ENCODE measurements at regions of chr17 and their contacts with region 1.

Region 1: DNA sequence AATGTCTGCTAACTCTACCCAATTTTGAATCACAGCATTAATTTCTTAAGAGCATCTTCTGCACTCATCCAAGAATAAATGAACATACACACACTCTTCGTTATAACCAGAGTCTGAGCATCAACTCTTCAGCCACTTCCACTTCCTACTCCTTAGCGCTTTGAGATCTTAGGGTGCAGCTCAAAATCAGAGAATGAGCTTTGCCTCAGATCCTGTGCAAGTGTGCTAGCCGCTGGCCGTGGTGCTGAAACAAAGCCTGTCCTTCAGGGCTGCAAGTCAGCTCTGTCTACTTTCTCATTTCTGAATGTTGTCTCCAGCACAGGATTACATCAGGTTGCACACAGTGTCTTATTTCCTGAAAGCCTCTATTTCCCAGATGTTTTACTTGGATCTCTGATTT is 165.4 kb downstream of the AIPL1 start:
- DNase-seq: no peak
- ATAC-seq: 0 out of 3 replicates have a peak, but pooled peaks have one; percentile 32
- H3K4me3 ChIP-seq: no peak overlapping the region
- H3K27ac ChIP-seq: no peak overlapping the region
- H3K4me1 ChIP-seq: no peaks in the 10 kb centered on the region
- H3K27me3 ChIP-seq: no peaks in the 10 kb centered on the region
- CTCF ChIP-seq: no peak
- EP300 ChIP-seq: no peak
- POLR2A ChIP-seq: no peak
- RAD21 ChIP-seq: no peak

Region 2: DNA sequence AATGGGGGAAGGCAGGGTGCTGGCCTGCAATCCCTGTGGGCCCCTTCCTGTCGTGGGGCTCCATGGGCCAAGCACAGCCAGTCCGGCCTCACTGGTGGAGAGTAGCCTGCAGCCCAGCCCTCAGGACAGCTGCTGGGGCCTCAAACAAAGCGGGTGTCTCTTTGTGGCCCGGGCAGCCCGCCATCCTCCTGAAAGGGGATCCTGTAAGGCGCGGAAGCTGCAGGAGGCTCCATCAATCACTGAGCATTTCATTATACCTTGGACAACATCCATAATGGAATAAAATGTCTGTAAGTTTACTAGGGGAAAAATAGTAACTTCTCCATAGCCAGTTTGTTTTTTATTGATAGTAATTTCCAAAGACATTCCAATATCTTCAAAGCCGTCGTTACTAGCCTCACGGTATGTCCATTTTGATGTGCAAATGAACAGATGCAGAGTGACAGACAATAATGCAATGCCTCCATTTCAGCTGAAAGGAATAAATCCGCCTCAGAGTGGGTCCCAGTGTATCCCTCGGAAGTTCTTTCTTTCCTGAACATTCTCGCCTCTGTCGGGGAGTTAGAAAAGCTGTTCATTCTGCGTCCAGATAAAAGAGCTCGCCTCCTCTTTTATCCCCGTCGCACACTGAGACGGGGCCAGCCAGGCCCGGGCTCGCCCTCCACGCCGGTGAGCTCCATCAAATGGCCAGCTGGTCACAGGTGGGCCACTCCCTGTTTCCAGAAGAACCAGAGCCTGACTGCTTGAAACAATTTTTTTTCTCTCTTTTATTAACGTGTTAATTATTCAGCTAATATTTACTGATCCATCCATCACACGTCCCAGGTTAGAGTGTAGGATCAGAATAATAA is 184.9 kb before region 1 on chr17:
- CTCF ChIA-PET with region 1: no interaction called
- POLR2A ChIA-PET with region 1: no interaction called
- RAD21 ChIA-PET with region 1: no interaction called
- SMC1A ChIA-PET with region 1: no interaction called
- in situ Hi-C with region 1: no loop called
- intact Hi-C with region 1: no loop called
- DNase-seq: no peak
- ATAC-seq: no peak
- H3K4me3 ChIP-seq: no peak overlapping the region
- H3K27ac ChIP-seq: no peak overlapping the region
- H3K4me1 ChIP-seq: no peaks in the 10 kb centered on the region
- H3K27me3 ChIP-seq: no peaks in the 10 kb centered on the region; a peak in 2 of 4 replicates
- CTCF ChIP-seq: no peak
- EP300 ChIP-seq: no peak
- POLR2A ChIP-seq: no peak
- RAD21 ChIP-seq: no peak

Region 3: GRCh38 chr17:6215071-6216035 is 54.1 kb before region 1 on chr17:
- CTCF ChIA-PET with region 1: no interaction called
- POLR2A ChIA-PET with region 1: no interaction called
- RAD21 ChIA-PET with region 1: no interaction called
- SMC1A ChIA-PET with region 1: no interaction called
- in situ Hi-C with region 1: loop called (anchors 5 kb)
- intact Hi-C with region 1: no loop called
- DNase-seq: no peak
- ATAC-seq: no peak
- H3K4me3 ChIP-seq: no peak overlapping the region
- H3K27ac ChIP-seq: no peak overlapping the region
- H3K4me1 ChIP-seq: no peaks in the 10 kb centered on the region
- H3K27me3 ChIP-seq: no peaks in the 10 kb centered on the region; a peak in 2 of 4 replicates
- CTCF ChIP-seq: no peak
- EP300 ChIP-seq: no peak
- POLR2A ChIP-seq: no peak
- RAD21 ChIP-seq: no peak

Measured in GM12878 (cell line).